ENCODE measurements at regions of chr2 and their contacts with region 1.

Region 1: DNA sequence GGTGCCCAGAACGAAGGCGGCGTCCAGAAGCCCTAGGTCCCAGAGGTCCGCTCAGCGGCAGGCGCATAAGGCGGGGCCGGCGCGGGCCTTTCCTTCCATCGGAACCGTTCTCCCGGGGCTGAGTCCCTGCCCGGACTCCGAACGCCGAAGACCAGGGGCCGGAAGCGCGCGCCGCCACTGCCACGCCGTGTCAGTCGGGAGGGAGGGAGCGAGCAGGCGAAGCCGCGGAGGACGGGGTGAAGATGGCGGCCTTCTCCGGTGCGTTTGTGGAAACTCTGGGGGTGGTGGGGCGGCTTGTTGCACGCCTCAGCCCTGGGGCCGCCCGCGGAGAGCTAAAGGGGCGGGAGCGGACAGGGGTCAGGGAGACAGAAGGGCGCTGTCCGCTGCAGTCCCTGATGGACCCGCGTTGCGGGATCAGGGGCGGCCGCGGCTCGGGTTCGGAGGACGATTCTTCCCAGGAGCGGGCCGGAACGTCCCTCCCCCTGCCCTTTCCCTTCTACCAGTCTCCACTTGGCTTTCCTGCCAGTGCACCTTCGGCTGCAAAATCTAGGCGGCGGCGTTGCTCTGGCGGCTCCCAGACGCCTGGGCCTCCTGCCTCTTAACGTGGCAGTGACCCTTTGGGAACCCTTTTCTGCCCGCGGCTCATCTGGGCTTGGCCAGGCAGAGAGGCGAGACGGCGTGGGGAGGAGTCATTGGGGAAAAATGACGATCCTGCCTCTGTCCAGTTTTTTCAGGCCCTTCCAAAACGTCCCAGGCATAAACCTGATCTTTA is at the start of gene DDX1:
- DNase-seq: peak; percentile 83
- ATAC-seq: peak; percentile 93
- H3K4me3 Mint-ChIP-seq: peak within 1 kb of the TSS; percentile 95
- H3K27ac Mint-ChIP-seq: peak within 1 kb of the TSS; percentile 91
- H3K4me1 Mint-ChIP-seq: peaks cover 29% of the 10 kb centered on the region
- H3K27me3 Mint-ChIP-seq: no peaks in the 10 kb centered on the region
- CTCF ChIP-seq: no peak
- total RNA-seq, gene DDX1: 72.4 and 74.4 TPM in 2 replicates

Region 2: GRCh38 chr2:15142069-15142873 is 449.6 kb before region 1 on chr2:
- CTCF ChIA-PET with region 1: no interaction called
- POLR2A ChIA-PET with region 1: no interaction called
- intact Hi-C with region 1: loop called (anchors 1 kb)
- DNase-seq: peak; percentile 22
- ATAC-seq: peak; percentile 97
- H3K4me3 Mint-ChIP-seq: peak overlapping the region; percentile 64
- H3K27ac Mint-ChIP-seq: peak overlapping the region; percentile 42
- H3K4me1 Mint-ChIP-seq: peaks cover 21% of the 10 kb centered on the region
- H3K27me3 Mint-ChIP-seq: no peaks in the 10 kb centered on the region
- CTCF ChIP-seq: no peak

Region 3: GRCh38 chr2:15177103-15177502 is 414.8 kb before region 1 on chr2:
- CTCF ChIA-PET with region 1: no interaction called
- POLR2A ChIA-PET with region 1: no interaction called
- intact Hi-C with region 1: no loop called
- DNase-seq: no peak
- ATAC-seq: no peak
- H3K4me3 Mint-ChIP-seq: no peak overlapping the region
- H3K27ac Mint-ChIP-seq: no peak overlapping the region
- H3K4me1 Mint-ChIP-seq: no peaks in the 10 kb centered on the region
- H3K27me3 Mint-ChIP-seq: no peaks in the 10 kb centered on the region
- CTCF ChIP-seq: no peak

Region 4: DNA sequence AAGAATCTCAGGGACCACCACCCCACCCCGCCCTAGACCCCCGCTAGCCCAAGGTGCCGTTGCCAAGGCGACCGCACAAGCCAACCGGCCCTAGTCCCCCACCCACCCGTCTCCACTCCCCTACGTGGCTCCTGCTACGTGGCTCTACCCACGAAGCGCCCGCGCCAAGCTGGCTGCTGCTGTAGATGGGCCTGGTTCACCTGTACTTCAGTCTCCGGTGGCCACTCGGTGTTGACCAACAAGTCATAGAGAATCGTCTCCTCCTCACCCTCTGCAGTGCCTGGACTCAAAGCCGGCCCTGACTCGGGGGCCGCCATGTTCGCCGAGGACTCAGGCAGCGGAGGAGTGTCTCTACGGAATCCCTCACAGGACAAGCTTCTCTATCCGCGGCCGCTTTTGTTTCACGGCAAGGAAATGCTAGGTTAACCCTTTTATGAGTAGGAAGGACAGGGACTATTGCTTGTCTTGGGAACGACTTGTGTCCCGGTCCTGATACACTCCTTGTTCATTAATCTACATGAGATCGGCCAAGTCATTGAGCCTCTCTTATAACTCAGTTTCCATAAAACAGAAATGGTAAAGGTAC is 30.8 kb before region 1 on chr2 and contains the start of gene NBAS:
- CTCF ChIA-PET with region 1: interaction called, 3 read pairs
- POLR2A ChIA-PET with region 1: interaction called, 19 read pairs
- intact Hi-C with region 1: loop called (anchors 1 kb)
- DNase-seq: peak; percentile 54
- ATAC-seq: peak; percentile 92
- H3K4me3 Mint-ChIP-seq: peak within 1 kb of the TSS; percentile 100
- H3K27ac Mint-ChIP-seq: peak within 1 kb of the TSS; percentile 89
- H3K4me1 Mint-ChIP-seq: peaks cover 31% of the 10 kb centered on the region
- H3K27me3 Mint-ChIP-seq: peaks cover 3% of the 10 kb centered on the region
- CTCF ChIP-seq: no peak
- total RNA-seq, gene NBAS: 39.1 and 40.1 TPM in 2 replicates

Measured in activated B cell treated with CpG ODN at 0.5 μM for 24 hours (primary cell).